ENCODE measurements at regions of chr3 and their contacts with region 1.

Region 1: DNA sequence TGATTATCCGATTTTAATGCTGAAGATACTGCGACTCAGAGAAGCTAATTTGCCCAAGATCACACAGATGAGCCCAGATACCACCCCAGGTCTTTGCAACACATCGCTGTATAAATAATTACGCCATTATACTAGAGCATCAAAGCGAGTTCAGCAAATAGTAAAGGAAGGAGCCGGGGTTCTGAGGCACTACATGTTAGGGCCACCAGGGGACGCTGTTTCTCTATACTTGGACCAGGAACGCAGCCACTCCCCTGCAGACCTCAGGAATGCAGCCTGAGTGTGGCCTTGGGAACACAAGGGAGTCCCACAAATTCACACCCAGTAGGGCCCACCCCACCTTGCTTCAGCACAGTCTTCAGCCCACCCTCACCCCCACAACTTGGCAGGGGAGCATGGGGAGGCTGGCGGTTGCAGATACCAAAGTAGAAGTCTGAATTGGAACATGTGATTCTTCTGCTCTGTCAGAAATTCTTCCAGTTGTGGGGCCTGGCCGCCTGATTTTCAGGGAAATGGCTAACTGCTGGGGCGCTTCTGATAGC is 57.8 kb upstream of the RYK start:
- DNase-seq: no peak
- H3K4me3 ChIP-seq: no peak overlapping the region
- H3K27me3 ChIP-seq: no peaks in the 10 kb centered on the region
- CTCF ChIP-seq: peak; percentile 99

Region 2: GRCh38 chr3:134106580-134106979 is 201.8 kb before region 1 on chr3:
- CTCF ChIA-PET with region 1: no interaction called
- POLR2A ChIA-PET with region 1: no interaction called
- DNase-seq: no peak
- H3K4me3 ChIP-seq: no peak overlapping the region
- H3K27me3 ChIP-seq: no peaks in the 10 kb centered on the region
- CTCF ChIP-seq: no peak

Region 3: GRCh38 chr3:134331008-134331830 is 22.8 kb after region 1 on chr3:
- CTCF ChIA-PET with region 1: interaction called, 12 read pairs
- POLR2A ChIA-PET with region 1: interaction called, 8 read pairs
- DNase-seq: peak; percentile 84
- H3K4me3 ChIP-seq: peak overlapping the region; percentile 20
- H3K27me3 ChIP-seq: no peaks in the 10 kb centered on the region
- CTCF ChIP-seq: no peak

Region 4: GRCh38 chr3:134357261-134358184 is 49.1 kb after region 1 on chr3:
- CTCF ChIA-PET with region 1: interaction called, 41 read pairs
- POLR2A ChIA-PET with region 1: interaction called, 7 read pairs
- DNase-seq: peak; percentile 96
- H3K4me3 ChIP-seq: no peak overlapping the region
- H3K27me3 ChIP-seq: no peaks in the 10 kb centered on the region
- CTCF ChIP-seq: no peak

Region 5: DNA sequence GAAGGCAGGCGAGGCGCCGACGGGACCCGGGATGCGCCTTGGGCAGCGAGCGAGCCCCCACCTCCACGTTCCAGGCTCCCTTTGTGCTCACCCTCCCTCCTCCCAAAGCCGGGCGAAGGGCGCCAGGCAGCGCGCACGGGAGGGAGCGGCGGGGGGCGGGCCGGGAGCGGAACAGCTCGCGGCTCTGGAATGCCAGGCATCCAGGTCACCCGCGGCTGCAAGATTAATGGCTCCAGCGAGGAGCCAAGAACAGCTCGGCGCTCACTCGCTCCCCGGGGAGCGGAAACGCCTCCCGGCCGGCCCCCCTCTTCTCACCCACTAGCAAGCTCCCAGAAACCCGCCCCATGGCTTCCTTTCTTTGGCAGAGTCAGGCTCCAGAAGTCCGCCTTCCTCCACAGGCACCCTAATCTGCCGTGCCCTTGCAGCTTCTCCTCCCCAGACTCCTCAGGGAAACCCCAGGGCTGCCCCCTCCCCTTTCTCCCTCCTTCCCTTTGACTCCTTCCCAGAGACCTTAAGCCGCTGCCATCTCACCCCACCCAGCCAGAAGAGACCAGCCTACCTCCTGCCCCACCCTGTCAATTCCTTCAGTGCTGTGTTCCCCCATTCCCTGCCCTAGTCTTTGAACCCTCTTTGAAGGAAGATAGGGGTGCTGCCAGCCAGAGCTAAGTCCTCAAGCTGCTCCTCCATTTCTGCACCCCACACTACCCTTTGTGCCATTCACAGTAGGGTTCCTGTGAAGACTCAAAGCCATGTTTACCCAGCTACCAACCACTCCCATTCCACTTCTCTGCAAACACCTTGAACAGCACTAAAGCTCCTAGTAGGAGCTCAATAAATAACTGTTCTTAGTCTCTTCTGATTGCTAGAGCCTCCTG is 55.9 kb after region 1 on chr3:
- CTCF ChIA-PET with region 1: interaction called, 84 read pairs
- POLR2A ChIA-PET with region 1: interaction called, 7 read pairs
- DNase-seq: peak; percentile 89
- H3K4me3 ChIP-seq: peak overlapping the region; percentile 24
- H3K27me3 ChIP-seq: no peaks in the 10 kb centered on the region
- CTCF ChIP-seq: no peak

Region 6: GRCh38 chr3:134373994-134374790 is 65.8 kb after region 1 on chr3 and contains the start of gene AMOTL2:
- CTCF ChIA-PET with region 1: interaction called, 84 read pairs
- POLR2A ChIA-PET with region 1: interaction called, 10 read pairs
- DNase-seq: peak; percentile 86
- H3K4me3 ChIP-seq: peak within 1 kb of the TSS; percentile 97
- H3K27me3 ChIP-seq: no peaks in the 10 kb centered on the region
- CTCF ChIP-seq: no peak
- polyA plus RNA-seq, gene AMOTL2: 122 and 199 TPM in 2 replicates

Region 7: DNA sequence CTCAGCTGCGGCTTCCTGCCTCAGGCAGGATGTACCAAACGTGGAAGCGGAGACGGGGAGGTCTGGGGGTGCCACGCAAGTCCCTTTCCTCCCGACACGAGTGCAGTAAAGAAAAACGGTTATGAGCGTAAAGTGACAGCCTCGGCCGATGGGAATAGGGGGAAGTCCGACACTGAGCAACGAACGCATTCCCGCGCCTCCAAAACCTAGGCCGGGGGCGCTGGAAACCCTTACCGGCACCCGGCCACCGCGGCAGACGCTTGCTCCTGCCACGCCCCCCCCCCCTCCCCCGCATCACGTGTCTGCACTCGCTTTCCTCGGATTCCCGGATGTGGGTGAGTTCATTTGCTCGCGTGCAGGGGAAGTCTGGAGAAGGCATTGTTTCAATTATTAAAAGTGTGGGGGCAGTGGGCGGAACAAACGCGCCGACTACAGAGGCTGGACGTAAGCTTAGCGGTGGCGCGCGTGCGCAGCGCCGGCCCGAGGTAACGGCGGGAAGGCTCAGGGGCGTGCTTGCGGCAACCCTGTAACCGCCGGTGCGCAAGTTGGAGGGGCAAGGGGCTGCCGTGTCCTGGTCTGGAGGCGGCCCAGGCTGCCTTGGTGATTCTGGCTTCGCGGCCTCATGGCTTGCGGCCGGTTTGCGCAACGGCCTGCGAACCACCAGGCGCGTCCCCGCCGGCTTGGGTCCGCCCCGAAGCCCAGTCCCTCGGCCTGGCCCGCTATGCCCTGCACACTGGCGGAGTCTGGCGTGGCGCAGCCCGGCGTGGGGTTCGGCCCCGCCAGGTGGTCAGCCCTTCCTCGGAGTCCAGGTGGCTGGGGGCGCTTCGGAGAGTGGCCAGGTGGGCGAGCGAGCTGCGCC is 177.5 kb after region 1 on chr3 and contains the starts of genes ANAPC13 and CEP63:
- CTCF ChIA-PET with region 1: interaction called, 114 read pairs
- POLR2A ChIA-PET with region 1: interaction called, 3 read pairs
- DNase-seq: peak; percentile 98
- H3K4me3 ChIP-seq: peak within 1 kb of the TSS; percentile 85
- H3K27me3 ChIP-seq: no peaks in the 10 kb centered on the region
- CTCF ChIP-seq: no peak
- polyA plus RNA-seq, gene ANAPC13: 54.6 and 115 TPM in 2 replicates
- polyA plus RNA-seq, gene CEP63: 6.4 and 14.5 TPM in 2 replicates